ENCODE measurements at regions of chr3 and their contacts with region 1.

Region 1: GRCh38 chr3:71734883-71735282 is 9.7 kb upstream of the EIF4E3 start:
- DNase-seq: no peak
- H3K4me3 ChIP-seq: no peak overlapping the region
- H3K27ac ChIP-seq: no peak overlapping the region
- H3K4me1 ChIP-seq: peaks cover 2 to 6% (median 3%) of the 10 kb centered on the region in 4 donors
- H3K27me3 ChIP-seq: no peaks in the 10 kb centered on the region
- CTCF ChIP-seq: no peak
- EP300 ChIP-seq: no peak
- POLR2A ChIP-seq: no peak

Region 2: GRCh38 chr3:71548705-71549384 is 186.0 kb before region 1 on chr3:
- intact Hi-C with region 1: no loop called
- DNase-seq: no peak
- H3K4me3 ChIP-seq: no peak overlapping the region
- H3K27ac ChIP-seq: peak overlapping the region in 1 of 5 donors; percentile 77
- H3K4me1 ChIP-seq: peaks cover 0 to 49% (median 9%) of the 10 kb centered on the region in 4 donors
- H3K27me3 ChIP-seq: no peaks in the 10 kb centered on the region
- CTCF ChIP-seq: no peak
- EP300 ChIP-seq: no peak
- POLR2A ChIP-seq: no peak

Region 3: DNA sequence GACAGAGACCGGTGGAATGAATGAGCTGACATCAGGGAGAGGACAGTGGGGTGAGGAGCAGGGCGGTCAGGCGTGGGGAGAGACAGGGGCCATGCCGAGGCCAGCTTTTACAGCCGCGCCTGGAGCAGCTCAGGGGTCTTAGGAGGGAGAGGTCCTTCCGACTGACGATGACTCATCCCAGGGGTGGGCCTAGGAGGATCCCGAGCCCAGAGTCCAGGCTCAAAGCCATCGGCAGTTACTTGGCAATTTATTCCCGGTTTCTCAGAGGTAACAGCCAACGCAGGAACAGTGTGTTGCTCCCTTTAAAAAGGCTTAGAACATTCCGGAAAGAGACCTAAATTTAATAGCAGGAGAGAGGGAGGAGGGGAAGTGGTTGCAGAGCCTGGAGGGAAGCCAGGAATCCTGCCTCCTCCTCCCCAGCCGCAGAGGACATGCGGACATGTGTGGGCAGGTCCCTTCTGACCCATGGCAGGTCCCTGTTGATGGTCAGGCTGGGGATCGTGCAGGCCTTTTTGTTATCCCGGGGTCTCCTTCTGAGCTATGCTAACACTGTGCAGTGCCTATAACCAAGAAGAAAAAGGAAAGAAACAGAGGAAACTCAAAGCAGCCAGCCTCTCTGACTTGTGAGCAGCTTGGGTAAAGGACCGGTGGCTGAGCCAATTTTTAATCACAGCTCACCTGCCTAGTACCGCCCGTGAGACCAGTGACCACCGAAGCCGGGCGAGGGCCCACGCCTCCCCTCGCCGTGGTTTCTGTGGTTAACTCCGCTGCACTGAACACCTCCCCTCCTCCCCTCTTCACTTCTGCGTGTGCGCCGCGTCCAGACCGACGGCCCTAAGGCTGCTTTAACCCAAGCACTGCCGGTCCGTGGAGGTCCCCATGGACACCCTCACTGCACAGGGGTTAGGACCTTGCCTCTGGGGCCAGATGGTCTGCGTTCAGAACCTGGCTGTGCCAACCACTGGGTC is 442.5 kb after region 1 on chr3:
- intact Hi-C with region 1: no loop called
- DNase-seq: peak; percentile 28 to 79
- H3K4me3 ChIP-seq: peak overlapping the region; percentile 16 to 28 (median 20)
- H3K27ac ChIP-seq: peak overlapping the region in 3 of 5 donors; percentile 23 to 72 (median 53)
- H3K4me1 ChIP-seq: peaks cover 11 to 36% (median 20%) of the 10 kb centered on the region in 4 donors
- H3K27me3 ChIP-seq: peaks cover 0 to 6% (median 0%) of the 10 kb centered on the region in 3 donors
- CTCF ChIP-seq: no peak
- EP300 ChIP-seq: no peak
- POLR2A ChIP-seq: no peak

Region 4: GRCh38 chr3:72821161-72821781 is 1086.4 kb after region 1 on chr3:
- intact Hi-C with region 1: loop called (anchors 10 kb)
- DNase-seq: peak in 1 of 2 donors; percentile 63
- H3K4me3 ChIP-seq: no peak overlapping the region
- H3K27ac ChIP-seq: peak overlapping the region in 2 of 5 donors; percentile 13 to 16
- H3K4me1 ChIP-seq: peaks cover 11 to 40% (median 29%) of the 10 kb centered on the region in 4 donors
- H3K27me3 ChIP-seq: no peaks in the 10 kb centered on the region
- CTCF ChIP-seq: no peak
- EP300 ChIP-seq: no peak
- POLR2A ChIP-seq: no peak

Measured in stomach (tissue), 19 donors.